ENCODE measurements at regions of chr10 and their contacts with region 1.

Region 1: GRCh38 chr10:57849691-57850357 is 417.9 kb downstream of the IPMK start:
- DNase-seq: peak; percentile 67
- ATAC-seq: peak; percentile 67
- H3K4me3 ChIP-seq: no peak overlapping the region
- H3K27ac ChIP-seq: no peak overlapping the region
- H3K4me1 ChIP-seq: no peaks in the 10 kb centered on the region
- H3K27me3 ChIP-seq: no peaks in the 10 kb centered on the region
- CTCF ChIP-seq: peak; percentile 89

Region 2: GRCh38 chr10:57338823-57339558 is 510.8 kb before region 1 on chr10:
- CTCF ChIA-PET with region 1: no interaction called
- POLR2A ChIA-PET with region 1: no interaction called
- intact Hi-C with region 1: loop called (anchors 5 kb)
- DNase-seq: peak; percentile 86
- ATAC-seq: peak; percentile 77
- H3K4me3 ChIP-seq: no peak overlapping the region
- H3K27ac ChIP-seq: no peak overlapping the region
- H3K4me1 ChIP-seq: no peaks in the 10 kb centered on the region
- H3K27me3 ChIP-seq: no peaks in the 10 kb centered on the region
- CTCF ChIP-seq: peak; percentile 91

Region 3: DNA sequence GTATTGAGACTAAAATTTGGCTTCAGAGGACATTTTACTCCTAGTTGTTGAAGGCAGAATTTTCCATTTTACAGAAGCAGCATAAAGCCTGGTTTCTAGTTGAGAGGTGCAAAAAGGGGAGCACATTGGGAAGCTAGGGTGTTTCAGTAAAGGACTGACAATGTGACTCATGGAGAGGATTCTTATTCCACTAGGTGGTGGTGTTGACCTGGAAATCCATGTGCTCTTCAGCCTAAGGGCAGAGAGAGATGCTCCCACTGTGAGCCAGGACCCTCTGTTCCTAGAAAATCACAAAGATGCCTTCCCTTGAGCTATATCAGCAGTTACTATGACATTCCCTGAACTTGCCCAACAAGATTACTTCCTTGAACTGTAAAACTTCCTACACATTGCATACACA is 269.9 kb before region 1 on chr10:
- CTCF ChIA-PET with region 1: no interaction called
- POLR2A ChIA-PET with region 1: no interaction called
- intact Hi-C with region 1: loop called (anchors 1 kb)
- DNase-seq: peak; percentile 78
- ATAC-seq: peak; percentile 98
- H3K4me3 ChIP-seq: no peak overlapping the region
- H3K27ac ChIP-seq: no peak overlapping the region
- H3K4me1 ChIP-seq: no peaks in the 10 kb centered on the region
- H3K27me3 ChIP-seq: no peaks in the 10 kb centered on the region
- CTCF ChIP-seq: peak; percentile 90

Region 4: GRCh38 chr10:57599440-57599839 is 250.4 kb before region 1 on chr10:
- CTCF ChIA-PET with region 1: no interaction called
- POLR2A ChIA-PET with region 1: no interaction called
- intact Hi-C with region 1: loop called (anchors 5 kb)
- DNase-seq: peak; percentile 79
- ATAC-seq: peak; percentile 99
- H3K4me3 ChIP-seq: no peak overlapping the region
- H3K27ac ChIP-seq: peak overlapping the region; percentile 45
- H3K4me1 ChIP-seq: peaks cover 12% of the 10 kb centered on the region
- H3K27me3 ChIP-seq: peaks cover 6% of the 10 kb centered on the region; the same call in 1 of the 2 replicates
- CTCF ChIP-seq: no peak

Region 5: GRCh38 chr10:57657164-57657765 is 192.6 kb before region 1 on chr10:
- CTCF ChIA-PET with region 1: interaction called, 3 read pairs
- POLR2A ChIA-PET with region 1: interaction called, 13 read pairs
- intact Hi-C with region 1: loop called (anchors 1 kb)
- DNase-seq: peak; percentile 89
- ATAC-seq: peak; percentile 95
- H3K4me3 ChIP-seq: no peak overlapping the region
- H3K27ac ChIP-seq: no peak overlapping the region
- H3K4me1 ChIP-seq: no peaks in the 10 kb centered on the region
- H3K27me3 ChIP-seq: no peaks in the 10 kb centered on the region
- CTCF ChIP-seq: peak; percentile 93

Region 6: DNA sequence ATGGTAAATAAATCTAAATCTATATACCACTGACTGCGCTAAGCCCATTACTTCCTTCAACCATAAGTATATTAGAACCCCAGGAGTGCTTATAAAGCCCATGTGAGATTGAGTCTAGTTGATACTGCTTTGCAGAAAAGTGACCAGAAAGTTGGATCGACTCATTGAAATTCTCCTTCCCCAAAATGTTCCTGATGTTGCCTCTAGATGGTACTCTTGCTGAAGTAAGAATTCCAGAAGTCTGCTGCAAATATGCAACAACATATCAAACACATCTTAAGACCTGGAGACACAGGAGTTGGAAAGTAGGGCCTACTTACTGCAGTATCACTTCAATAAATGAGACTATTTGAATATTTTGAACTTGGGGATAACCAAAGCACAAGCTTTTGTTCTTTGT is 132.9 kb before region 1 on chr10:
- CTCF ChIA-PET with region 1: no interaction called
- POLR2A ChIA-PET with region 1: no interaction called
- intact Hi-C with region 1: loop called (anchors 1 kb)
- DNase-seq: peak; percentile 78
- ATAC-seq: peak; percentile 84
- H3K4me3 ChIP-seq: no peak overlapping the region
- H3K27ac ChIP-seq: no peak overlapping the region
- H3K4me1 ChIP-seq: no peaks in the 10 kb centered on the region
- H3K27me3 ChIP-seq: no peaks in the 10 kb centered on the region
- CTCF ChIP-seq: peak; percentile 86

Region 7: DNA sequence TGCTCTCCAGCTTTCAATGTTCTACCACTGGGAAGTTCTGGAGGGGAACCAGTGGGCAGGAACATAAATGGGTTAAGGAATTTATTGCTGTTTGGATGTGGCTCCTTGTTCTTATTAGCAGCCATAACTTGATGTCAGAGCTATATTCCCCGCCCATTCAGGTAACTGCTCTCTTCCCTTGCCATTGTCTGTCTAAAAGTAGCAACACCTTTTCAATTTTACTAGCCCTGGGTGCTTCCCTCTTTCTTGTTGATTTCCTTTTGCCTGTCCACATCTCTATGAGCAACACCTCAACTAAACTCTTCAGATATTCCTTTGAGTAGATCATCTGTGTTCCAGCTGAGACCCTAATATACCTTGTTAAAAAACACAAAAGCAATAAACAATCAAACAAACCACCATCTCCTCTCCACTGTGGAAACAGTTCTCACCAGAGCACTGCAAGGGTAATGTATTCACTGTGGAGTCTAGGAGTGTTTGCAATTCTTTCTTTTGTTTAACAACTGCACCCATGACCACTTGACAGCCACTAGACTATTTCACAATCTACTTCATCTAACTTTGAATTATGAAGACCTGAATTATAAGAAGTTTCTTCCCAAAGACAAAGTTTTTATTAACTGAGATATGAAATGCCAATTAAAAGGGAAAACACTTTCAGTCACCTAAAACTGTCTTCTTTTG is 18.8 kb before region 1 on chr10:
- CTCF ChIA-PET with region 1: no interaction called
- POLR2A ChIA-PET with region 1: no interaction called
- intact Hi-C with region 1: loop called (anchors 1 kb)
- DNase-seq: no peak
- ATAC-seq: no peak
- H3K4me3 ChIP-seq: no peak overlapping the region
- H3K27ac ChIP-seq: no peak overlapping the region
- H3K4me1 ChIP-seq: no peaks in the 10 kb centered on the region
- H3K27me3 ChIP-seq: no peaks in the 10 kb centered on the region
- CTCF ChIP-seq: no peak

Region 8: GRCh38 chr10:58431903-58432302 is 582.1 kb after region 1 on chr10:
- CTCF ChIA-PET with region 1: no interaction called
- POLR2A ChIA-PET with region 1: no interaction called
- intact Hi-C with region 1: no loop called
- DNase-seq: no peak
- ATAC-seq: no peak
- H3K4me3 ChIP-seq: no peak overlapping the region
- H3K27ac ChIP-seq: no peak overlapping the region
- H3K4me1 ChIP-seq: peaks cover 20% of the 10 kb centered on the region
- H3K27me3 ChIP-seq: 0 out of 2 replicates have a peak, but pooled peaks cover 6% of the 10 kb centered on the region
- CTCF ChIP-seq: no peak

Measured in PC-3 (cell line).